CD4-positive, alpha-beta memory T cell (primary cell): ENCODE measurements at regions of chr2 and their contacts with region 1.

Region 1: DNA sequence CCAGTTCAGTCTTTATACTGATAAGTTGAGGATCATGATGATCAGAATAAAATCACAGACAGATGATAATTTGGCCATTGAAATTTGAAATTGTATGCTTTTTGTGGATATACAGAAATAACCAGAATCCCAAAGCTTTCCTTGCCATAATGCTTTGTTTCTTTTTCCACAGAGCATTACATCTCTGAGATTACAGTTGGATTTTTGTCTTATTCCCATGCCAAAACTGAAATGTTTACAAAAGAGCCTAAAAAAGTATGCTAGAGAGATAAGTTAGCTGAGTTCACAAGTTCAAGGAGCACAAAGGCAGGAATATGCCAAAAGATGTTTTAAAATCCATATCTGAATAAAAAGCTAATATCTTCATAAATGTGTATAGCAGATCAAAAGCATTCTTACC is 321.3 kb downstream of the PID1 start:
- DNase-seq: no peak
- H3K4me3 ChIP-seq: no peak overlapping the region
- H3K4me3 Mint-ChIP-seq: no peak overlapping the region
- H3K27ac ChIP-seq: no peak overlapping the region
- H3K27ac Mint-ChIP-seq: no peak overlapping the region
- H3K4me1 ChIP-seq: no peaks in the 10 kb centered on the region
- H3K4me1 Mint-ChIP-seq: no peaks in the 10 kb centered on the region
- H3K27me3 ChIP-seq: no peaks in the 10 kb centered on the region
- H3K27me3 Mint-ChIP-seq: no peaks in the 10 kb centered on the region

Region 2: GRCh38 chr2:228819701-228820100 is 130.1 kb before region 1 on chr2:
- CTCF ChIA-PET with region 1: no interaction called
- POLR2A ChIA-PET with region 1: no interaction called
- intact Hi-C with region 1: no loop called
- DNase-seq: no peak
- H3K4me3 ChIP-seq: no peak overlapping the region
- H3K4me3 Mint-ChIP-seq: no peak overlapping the region
- H3K27ac ChIP-seq: no peak overlapping the region
- H3K27ac Mint-ChIP-seq: no peak overlapping the region
- H3K4me1 ChIP-seq: no peaks in the 10 kb centered on the region
- H3K4me1 Mint-ChIP-seq: no peaks in the 10 kb centered on the region
- H3K27me3 ChIP-seq: no peaks in the 10 kb centered on the region
- H3K27me3 Mint-ChIP-seq: no peaks in the 10 kb centered on the region

Region 3: GRCh38 chr2:229261599-229261998 is 311.8 kb after region 1 on chr2:
- CTCF ChIA-PET with region 1: no interaction called
- POLR2A ChIA-PET with region 1: no interaction called
- intact Hi-C with region 1: loop called (anchors 5 kb)
- DNase-seq: no peak
- H3K4me3 ChIP-seq: no peak overlapping the region
- H3K4me3 Mint-ChIP-seq: no peak overlapping the region
- H3K27ac ChIP-seq: no peak overlapping the region
- H3K27ac Mint-ChIP-seq: peak overlapping the region in 1 of 7 donors; percentile 6
- H3K4me1 ChIP-seq: no peaks in the 10 kb centered on the region
- H3K4me1 Mint-ChIP-seq: no peaks in the 10 kb centered on the region
- H3K27me3 ChIP-seq: no peaks in the 10 kb centered on the region
- H3K27me3 Mint-ChIP-seq: no peaks in the 10 kb centered on the region